ENCODE measurements at regions of chr14 and their contacts with region 1.

Region 1: DNA sequence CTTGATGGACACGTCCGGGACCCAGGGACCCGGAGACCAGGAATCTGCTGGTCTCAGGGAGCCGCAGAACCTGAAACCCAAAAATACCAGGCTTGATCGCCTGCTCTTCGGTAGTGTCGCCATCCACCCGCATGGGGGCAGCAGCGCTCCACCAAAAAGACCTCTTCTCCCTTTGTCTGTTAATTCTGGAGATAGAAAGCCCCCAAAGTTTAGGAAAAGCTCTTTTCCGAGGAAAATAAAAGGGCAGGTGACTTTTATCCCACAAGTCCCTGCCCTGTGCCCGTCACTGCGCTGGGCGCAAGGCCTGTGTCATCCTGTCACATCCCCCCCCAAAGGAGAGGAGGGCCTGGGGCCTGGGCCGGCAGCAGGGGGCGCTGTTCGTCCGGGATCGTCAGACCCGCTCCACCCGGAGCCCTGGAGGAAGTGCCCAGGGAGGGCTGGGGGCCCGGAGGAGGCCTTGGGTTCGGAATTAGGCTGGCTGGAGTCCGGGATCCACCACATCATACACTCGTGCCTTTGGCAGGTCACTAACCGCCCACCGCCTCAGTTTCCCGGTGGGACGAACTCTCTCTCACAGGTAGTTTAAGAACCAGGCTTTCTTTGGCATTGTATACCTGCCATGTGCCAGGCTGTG is 31.9 kb downstream of the DAD1 start:
- DNase-seq: peak; percentile 67 to 96
- H3K4me3 ChIP-seq: no peak overlapping the region
- CTCF ChIP-seq: peak in 2 of 3 donors; percentile 77 to 99
- POLR2A ChIP-seq: no peak

Region 2: DNA sequence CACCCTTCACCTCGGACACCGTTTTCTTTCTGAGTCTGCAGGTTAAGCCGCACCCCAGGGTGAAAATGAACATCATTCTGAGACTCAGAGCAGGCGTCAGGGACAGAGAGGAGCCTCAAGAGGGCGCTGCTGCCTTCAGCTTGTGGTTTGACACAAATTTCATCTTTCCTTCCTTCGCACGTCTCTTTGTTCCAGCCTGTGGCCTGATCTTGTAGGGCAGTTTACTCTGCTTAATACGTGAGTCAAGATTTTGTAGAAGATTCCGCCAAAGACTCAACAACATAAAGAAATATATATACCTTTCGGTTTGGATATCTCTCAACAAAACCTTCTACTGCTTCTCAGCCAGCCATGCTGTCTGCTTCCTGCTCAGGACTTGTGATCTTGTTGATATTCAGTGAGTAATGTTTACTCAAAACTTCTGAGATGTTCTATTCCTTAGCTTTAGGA is 554.2 kb before region 1 on chr14:
- intact Hi-C with region 1: no loop called
- DNase-seq: no peak
- H3K4me3 ChIP-seq: no peak overlapping the region
- CTCF ChIP-seq: no peak
- POLR2A ChIP-seq: no peak

Region 3: DNA sequence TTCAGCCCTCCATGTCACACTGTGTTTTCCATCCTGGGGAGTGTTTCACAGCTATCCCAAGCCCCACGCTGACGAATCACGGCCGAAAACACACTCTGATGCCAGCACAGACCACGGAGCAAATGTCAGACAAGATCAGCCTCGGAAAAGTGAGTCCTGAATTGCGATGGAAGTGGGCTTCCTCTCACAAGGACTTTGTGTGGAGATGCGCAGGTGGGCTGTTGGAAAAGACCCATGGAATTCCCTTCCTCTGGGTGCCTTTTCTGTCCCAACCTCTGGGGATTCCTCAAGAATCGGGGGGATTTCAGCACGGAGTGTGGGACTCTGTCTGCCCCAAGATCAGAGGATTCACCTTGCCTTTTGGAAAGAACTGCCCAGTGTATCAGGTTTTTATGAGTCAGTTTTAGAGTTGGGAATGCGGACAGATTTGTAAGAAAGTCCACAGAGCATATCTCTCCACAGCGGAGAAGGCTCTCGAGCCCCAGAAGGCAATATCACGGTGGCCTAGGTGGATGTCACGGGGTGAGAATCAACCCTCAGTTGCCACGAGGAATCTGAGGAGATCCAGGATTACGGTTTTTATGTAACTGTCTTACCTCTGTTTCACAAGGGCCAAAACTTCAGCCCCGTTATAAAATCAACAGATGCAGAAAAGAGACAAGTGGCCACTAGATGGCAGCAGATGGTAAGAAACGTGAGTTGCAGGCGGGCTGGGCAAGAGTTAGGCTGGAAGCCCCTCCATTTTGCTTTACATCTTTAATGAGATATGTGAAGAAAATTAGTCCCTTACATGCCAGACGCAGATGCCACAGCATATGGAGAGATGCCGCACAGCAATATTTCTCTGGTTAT is 170.0 kb before region 1 on chr14:
- intact Hi-C with region 1: loop called (anchors 10 kb)
- DNase-seq: peak; percentile 78 to 89
- H3K4me3 ChIP-seq: no peak overlapping the region
- CTCF ChIP-seq: no peak
- POLR2A ChIP-seq: no peak

Region 4: DNA sequence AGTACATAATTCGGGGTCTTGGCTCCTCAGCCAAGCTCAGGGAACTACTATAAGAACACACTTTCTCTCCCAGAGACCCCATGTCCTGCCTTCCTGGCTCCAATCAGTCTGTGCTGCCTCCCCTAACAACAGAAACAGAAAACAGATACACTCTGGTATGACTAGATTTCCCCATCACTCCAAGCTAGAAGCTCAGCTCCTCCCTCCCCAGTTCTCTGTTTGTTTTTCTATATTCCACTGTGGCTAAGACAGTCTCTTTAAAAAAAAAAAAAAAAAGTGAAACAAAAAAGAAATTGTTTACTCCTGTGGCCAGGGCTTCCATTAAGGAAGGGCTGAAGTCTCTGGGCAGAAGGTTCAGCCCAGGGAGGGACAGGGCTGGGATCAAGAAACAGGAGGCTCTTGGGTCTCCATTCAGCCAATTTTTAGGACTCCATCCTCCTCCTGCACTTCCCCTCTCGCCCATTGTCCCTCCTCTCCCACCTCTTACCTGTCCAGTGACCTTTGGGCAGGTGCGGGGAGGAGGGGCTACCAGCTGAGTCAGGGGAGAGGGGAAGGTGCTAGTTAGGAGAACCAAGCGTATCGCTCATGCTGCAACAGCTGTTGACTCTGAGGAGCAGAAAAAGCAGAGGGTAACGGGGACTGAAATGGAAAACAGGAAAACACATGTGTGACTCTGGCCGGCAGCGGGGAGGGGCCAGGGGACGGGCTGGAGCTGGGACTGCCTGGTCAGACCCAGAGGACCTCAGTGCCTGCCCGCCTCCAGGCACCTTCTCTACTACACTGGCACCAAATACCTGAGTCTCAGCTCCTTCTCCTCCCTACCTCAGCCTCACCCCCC is 262.3 kb after region 1 on chr14:
- intact Hi-C with region 1: loop called (anchors 10 kb)
- DNase-seq: peak; percentile 64 to 92
- H3K4me3 ChIP-seq: no peak overlapping the region
- CTCF ChIP-seq: no peak
- POLR2A ChIP-seq: no peak

Region 5: DNA sequence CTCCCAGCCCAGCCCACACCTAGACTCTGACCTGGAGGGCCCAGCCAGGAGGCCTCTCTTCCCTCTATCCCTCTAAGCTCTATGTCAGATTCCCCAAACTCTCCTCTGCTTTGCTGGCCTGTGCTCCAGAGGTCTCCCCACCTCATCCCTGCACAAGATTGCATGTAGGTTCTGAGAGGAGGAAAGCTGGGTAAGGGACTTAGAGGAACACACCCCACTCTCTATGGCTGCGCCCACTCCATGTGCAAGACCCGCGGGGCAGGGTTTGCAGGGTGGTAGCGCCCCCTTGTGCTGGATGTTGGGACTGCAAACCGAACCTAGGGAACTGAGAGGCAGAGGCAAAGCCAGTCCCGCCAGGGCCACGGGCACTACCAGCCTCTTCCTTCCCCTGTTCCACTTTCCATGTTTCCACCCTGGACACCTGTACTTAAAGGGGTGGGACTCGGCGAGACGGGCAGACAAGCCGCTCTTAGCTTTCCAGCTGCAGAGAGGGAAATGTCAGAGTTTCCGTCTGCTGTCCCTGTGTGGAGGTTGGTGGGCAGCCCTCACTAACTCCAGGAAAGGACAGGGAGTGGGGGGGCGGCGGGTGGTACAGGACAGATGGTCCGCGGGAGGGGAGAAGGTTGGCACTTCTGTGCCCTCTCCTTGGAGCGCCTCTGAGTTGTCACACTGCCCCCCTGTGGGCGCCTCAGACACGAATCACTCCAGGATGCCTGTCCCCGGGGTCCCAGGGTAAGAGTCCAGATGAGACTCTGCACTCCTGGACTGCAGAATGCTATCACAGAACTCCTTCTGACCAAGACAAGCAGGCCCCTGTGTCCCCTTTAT is 296.0 kb after region 1 on chr14:
- intact Hi-C with region 1: loop called (anchors 10 kb)
- DNase-seq: peak; percentile 91 to 99
- H3K4me3 ChIP-seq: peak overlapping the region; percentile 1
- CTCF ChIP-seq: peak in 2 of 3 donors; percentile 26 to 80
- POLR2A ChIP-seq: no peak

Measured in lower leg skin (tissue), 4 donors.